ENCODE measurements at regions of chr15 and their contacts with region 1.

Region 1: GRCh38 chr15:72722071-72722696 is 36.2 kb downstream of the BBS4 start:
- DNase-seq: peak; percentile 54
- H3K4me3 ChIP-seq: no peak overlapping the region; a peak in 1 of 4 replicates
- H3K27ac ChIP-seq: no peak overlapping the region
- H3K4me1 ChIP-seq: no peaks in the 10 kb centered on the region
- H3K27me3 ChIP-seq: no peaks in the 10 kb centered on the region
- CTCF ChIP-seq: peak; percentile 93
- EP300 ChIP-seq: no peak
- RAD21 ChIP-seq: peak; percentile 74

Region 2: DNA sequence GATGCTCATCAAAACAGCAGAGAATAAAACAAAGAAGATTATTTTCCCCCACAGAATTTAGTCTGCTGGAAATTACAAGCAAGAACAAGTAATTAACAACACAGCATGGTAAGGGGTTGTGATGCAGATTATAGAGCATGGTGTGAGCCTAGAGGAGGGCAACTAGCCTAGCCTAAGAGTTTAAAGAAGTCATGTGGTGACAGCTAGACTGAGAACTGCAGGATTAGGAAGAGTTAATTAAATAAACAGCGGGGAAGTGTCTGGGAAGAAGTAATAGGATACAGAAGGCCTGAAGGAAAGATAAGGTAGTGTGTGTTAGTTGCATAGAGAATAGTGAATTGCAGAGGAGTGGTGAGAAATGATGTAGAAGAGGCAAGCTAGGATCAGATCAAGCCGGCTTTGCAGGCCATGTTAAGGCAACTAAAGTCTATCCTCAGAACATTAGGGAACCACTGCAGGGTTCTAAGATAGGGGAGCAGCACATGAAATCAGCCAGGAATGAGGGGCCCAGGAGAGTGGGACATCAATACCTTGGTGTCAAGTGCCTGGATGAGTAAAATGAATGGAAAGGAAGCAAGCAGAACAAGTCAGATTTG is 479.3 kb before region 1 on chr15:
- CTCF ChIA-PET with region 1: no interaction called
- POLR2A ChIA-PET with region 1: no interaction called
- DNase-seq: no peak
- H3K4me3 ChIP-seq: no peak overlapping the region
- H3K27ac ChIP-seq: no peak overlapping the region
- H3K4me1 ChIP-seq: peaks cover 0 to 4% of the 10 kb centered on the region in 2 experiments; a peak in 2 of 4 replicates
- H3K27me3 ChIP-seq: no peaks in the 10 kb centered on the region
- CTCF ChIP-seq: no peak
- EP300 ChIP-seq: no peak
- RAD21 ChIP-seq: no peak

Region 3: DNA sequence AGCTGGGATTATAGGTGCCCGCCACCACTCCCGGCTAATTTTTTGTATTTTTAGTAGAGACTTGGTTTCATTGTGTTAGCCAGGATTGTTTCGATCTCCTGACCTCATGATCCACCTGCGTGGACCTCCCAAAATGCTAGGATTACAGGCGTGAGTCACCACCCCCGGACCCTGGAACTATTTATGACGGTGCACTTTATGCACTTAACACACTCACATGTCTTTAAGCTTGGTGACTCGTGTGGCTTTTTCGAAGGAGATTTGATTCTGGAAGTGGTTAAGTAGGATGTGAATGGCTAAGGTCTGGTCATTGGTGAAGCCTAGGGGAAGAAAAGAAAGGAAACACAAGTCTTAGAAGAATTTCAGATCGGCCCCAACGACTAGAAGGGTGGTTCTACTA is 15.9 kb before region 1 on chr15:
- CTCF ChIA-PET with region 1: interaction called, 27 read pairs
- POLR2A ChIA-PET with region 1: no interaction called
- DNase-seq: no peak
- H3K4me3 ChIP-seq: no peak overlapping the region
- H3K27ac ChIP-seq: no peak overlapping the region
- H3K4me1 ChIP-seq: no peaks in the 10 kb centered on the region; a peak in 1 of 4 replicates
- H3K27me3 ChIP-seq: no peaks in the 10 kb centered on the region
- CTCF ChIP-seq: no peak
- EP300 ChIP-seq: no peak
- RAD21 ChIP-seq: no peak

Region 4: GRCh38 chr15:72740219-72740618 is 18.0 kb after region 1 on chr15:
- CTCF ChIA-PET with region 1: interaction called, 72 read pairs
- POLR2A ChIA-PET with region 1: no interaction called
- DNase-seq: no peak
- H3K4me3 ChIP-seq: no peak overlapping the region
- H3K27ac ChIP-seq: no peak overlapping the region
- H3K4me1 ChIP-seq: no peaks in the 10 kb centered on the region
- H3K27me3 ChIP-seq: no peaks in the 10 kb centered on the region
- CTCF ChIP-seq: no peak
- EP300 ChIP-seq: no peak
- RAD21 ChIP-seq: no peak

Region 5: DNA sequence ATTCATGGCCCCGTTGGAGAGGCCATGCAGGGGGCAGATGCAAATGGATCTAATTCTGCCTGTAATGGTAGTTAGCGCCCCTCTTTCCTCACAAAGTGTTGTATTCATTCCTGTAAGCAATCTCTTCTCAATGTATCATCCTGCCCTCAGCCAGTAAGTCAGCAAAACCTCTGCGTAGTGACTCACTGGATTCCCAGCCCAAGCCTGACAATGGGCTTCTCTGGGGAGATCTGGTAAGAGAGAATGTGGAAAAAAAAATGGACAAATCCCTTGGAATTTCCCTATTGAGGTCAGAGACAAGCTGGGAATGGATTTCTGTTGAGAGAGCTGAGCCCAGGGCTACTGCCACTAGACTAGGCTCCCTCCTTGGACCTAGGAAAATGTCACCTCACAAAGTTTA is 36.0 kb after region 1 on chr15:
- CTCF ChIA-PET with region 1: interaction called, 15 read pairs
- POLR2A ChIA-PET with region 1: no interaction called
- DNase-seq: no peak
- H3K4me3 ChIP-seq: no peak overlapping the region
- H3K27ac ChIP-seq: peak overlapping the region in 1 of 2 experiments; percentile 89; a peak in 2 of 4 replicates
- H3K4me1 ChIP-seq: no peaks in the 10 kb centered on the region; a peak in 1 of 4 replicates
- H3K27me3 ChIP-seq: no peaks in the 10 kb centered on the region
- CTCF ChIP-seq: no peak
- EP300 ChIP-seq: no peak
- RAD21 ChIP-seq: no peak

Region 6: DNA sequence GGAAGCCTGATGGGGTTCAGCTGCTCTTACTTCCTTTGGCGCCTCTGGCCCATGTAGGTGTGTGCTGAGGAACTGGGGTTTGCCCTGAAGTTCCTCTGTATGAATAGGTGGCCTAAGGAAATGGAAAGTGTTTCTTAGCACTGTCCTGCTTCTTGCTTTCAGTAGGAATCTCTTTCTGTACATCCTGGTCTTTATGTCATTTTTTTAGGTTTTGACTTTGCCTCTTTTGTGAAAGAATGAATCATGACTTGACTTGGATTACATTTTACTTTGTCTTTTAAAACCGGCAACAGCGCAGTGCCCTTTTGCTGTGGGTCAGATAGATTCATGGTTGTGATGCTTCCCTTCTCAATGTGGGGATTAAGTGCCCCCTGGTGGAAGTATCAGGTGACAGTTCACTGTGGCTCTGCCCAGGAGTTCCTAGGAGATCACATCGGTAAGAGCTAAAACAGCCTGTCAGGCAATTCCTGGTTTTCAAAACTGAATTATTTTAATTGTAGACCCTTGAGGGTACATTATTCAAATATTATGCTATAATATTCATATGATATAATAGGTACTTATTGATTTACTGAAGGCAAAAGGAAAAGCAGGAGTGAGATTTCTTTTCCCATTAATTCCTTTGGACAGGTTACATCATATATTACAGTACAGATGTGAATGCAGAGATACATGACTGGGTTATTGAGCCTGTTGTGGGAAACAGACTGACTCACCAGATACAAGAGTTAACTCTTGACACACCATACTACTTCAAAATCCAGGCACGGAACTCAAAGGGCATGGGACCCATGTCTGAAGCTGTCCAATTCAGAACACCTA is 551.2 kb after region 1 on chr15:
- CTCF ChIA-PET with region 1: interaction called, 20 read pairs
- POLR2A ChIA-PET with region 1: interaction called, 4 read pairs
- DNase-seq: peak; percentile 71
- H3K4me3 ChIP-seq: peak overlapping the region in 1 of 2 experiments; percentile 7; a peak in 1 of 4 replicates
- H3K27ac ChIP-seq: no peak overlapping the region
- H3K4me1 ChIP-seq: no peaks in the 10 kb centered on the region; a peak in 1 of 4 replicates
- H3K27me3 ChIP-seq: no peaks in the 10 kb centered on the region
- CTCF ChIP-seq: peak; percentile 87
- EP300 ChIP-seq: no peak
- RAD21 ChIP-seq: peak; percentile 85